ENCODE measurements at regions of chr6 and their contacts with region 1.

Region 1: DNA sequence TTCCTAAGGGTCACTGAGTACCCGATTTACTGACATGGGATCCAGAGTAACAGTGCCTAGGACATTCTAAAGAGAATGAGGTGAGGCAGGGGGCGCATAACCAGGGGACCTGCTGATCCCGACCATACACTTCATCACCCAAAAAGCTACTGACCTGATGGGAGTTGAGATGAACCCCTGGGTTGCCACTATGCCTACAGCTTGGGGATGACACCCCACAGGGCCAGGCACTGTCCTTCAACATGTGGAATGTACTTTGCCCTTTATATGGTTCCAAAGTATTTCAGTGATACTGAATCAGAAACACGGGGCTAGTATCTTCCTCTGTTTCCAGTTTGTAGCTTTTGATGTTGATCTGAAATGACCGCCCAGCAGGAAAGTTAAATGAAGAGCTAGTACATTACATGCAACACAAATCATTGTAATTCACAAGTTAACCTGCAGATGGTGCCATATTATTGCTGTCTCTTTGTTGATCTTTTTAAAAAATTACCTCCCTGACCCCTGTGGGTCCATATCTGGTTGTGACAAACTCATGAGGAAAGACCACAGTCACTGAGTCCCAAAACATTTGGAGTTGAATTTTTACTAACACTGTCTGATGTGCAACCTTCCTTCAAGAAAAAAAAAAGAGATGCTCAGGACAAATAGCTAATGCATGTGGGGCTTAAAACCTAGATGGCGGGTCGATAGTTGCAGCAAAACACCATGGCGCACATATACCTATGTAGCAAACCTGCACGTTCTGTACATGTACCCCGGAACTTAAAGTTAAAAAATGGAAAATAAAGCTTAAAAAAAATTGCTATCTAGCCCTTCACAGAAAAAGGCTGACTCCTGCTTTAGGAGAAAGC is 42.7 kb upstream of the GCNT2 start:
- DNase-seq: peak; percentile 29 to 58
- H3K4me3 ChIP-seq: no peak overlapping the region
- H3K4me1 ChIP-seq: peaks cover 12% of the 10 kb centered on the region
- H3K27me3 ChIP-seq: no peaks in the 10 kb centered on the region

Region 2: DNA sequence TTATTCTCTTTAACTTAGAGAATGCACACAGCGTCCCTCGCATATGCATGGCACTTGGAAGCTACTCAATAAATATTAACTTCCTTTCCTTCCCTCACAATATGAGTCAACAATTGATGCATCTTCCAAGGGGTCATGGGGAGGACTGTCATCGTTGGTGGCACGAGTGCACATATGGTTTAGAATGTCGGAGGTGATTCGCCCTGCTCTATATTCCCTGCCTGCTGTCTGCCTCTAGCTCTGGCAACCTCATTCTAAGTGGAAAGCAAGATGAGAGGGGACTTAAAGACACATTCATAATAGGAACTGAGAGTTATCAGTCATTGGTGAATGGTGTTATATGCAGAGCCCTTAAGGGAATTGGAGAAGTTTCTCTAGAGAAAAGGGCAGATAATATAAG is 315.3 kb after region 1 on chr6:
- in situ Hi-C with region 1: loop called (anchors 25 kb)
- DNase-seq: no peak
- H3K4me3 ChIP-seq: no peak overlapping the region
- H3K4me1 ChIP-seq: no peaks in the 10 kb centered on the region
- H3K27me3 ChIP-seq: no peaks in the 10 kb centered on the region

Region 3: GRCh38 chr6:11050731-11051130 is 572.3 kb after region 1 on chr6:
- in situ Hi-C with region 1: loop called (anchors 25 kb)
- DNase-seq: no peak
- H3K4me3 ChIP-seq: no peak overlapping the region
- H3K4me1 ChIP-seq: no peaks in the 10 kb centered on the region
- H3K27me3 ChIP-seq: no peaks in the 10 kb centered on the region

Region 4: GRCh38 chr6:11232770-11233626 is 754.6 kb after region 1 on chr6:
- in situ Hi-C with region 1: no loop called
- DNase-seq: peak; percentile 66 to 85
- H3K4me3 ChIP-seq: peak overlapping the region; percentile 74
- H3K4me1 ChIP-seq: peaks cover 26% of the 10 kb centered on the region
- H3K27me3 ChIP-seq: no peaks in the 10 kb centered on the region